AG04449 (cell line): ENCODE measurements at regions of chr6 and their contacts with region 1.

Region 1: DNA sequence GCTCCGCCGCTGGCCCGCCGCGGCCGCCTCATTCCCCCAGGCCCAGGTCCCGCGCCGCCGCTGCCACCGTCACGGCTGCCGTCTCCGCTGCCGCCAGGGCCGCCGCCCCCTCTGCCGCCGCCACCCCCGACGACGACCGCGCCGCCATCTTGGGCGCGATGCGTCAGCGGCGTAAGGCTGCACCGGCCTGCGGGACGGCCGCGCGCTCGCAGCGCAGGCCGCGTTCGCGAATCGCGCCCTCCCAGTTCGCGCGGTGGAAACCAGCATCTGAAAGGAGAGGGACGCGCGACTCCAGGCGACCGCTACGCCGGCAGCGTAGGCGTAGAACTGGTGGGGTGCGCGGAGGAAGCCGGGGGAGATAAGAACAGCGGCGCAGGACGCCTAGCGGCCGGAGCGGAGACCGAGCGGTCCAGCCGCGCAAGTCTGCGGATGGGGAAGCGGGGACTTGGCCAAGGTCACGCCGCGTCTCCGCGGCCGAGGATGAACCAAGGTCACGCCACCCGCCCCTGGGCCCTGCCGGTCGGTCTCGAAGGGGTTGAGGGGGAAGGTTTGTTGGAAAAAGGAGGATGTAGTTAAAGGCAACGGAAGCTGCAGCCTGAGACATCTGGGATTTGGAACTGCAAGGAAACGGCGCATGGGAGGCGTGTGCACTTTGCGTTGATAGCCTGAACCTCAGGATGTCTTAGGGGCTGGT is at the start of gene NUDT3:
- DNase-seq: peak; percentile 49
- H3K4me3 ChIP-seq: peak within 1 kb of the TSS; percentile 83
- CTCF ChIP-seq: peak; percentile 91

Region 2: DNA sequence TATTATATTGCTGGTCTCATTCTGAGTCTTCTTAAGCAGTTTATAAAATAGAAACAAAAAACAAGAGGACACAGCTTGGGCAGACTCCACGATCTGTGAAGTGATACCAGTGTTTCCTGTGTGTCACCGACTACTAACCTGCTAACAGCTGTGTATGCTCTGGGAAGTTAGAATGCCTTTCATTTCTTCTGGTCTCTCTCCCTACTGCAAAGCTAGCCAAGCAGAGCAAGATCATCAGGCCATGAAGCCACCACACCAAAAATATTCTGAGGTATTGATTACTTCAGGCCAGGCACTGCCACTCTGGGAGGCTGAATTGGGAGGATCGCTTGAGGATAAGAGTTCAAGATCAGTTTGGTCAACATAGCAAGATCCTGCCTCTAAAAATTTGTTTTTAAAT is 96.9 kb before region 1 on chr6:
- CTCF ChIA-PET with region 1: no interaction called
- POLR2A ChIA-PET with region 1: no interaction called
- DNase-seq: no peak
- H3K4me3 ChIP-seq: no peak overlapping the region
- CTCF ChIP-seq: no peak

Region 3: GRCh38 chr6:34381081-34381480 is 11.6 kb before region 1 on chr6:
- CTCF ChIA-PET with region 1: interaction called, 11 read pairs
- POLR2A ChIA-PET with region 1: no interaction called
- DNase-seq: no peak
- H3K4me3 ChIP-seq: no peak overlapping the region
- CTCF ChIP-seq: no peak